ENCODE measurements at regions of chr12 and their contacts with region 1.

Region 1: GRCh38 chr12:102169922-102170621 is 27.6 kb downstream of the PMCH start:
- DNase-seq: peak; percentile 22
- CTCF ChIP-seq: peak; percentile 68

Region 2: GRCh38 chr12:102144221-102144620 is 25.9 kb before region 1 on chr12:
- CTCF ChIA-PET with region 1: interaction called, 12 read pairs
- POLR2A ChIA-PET with region 1: no interaction called
- DNase-seq: no peak
- CTCF ChIP-seq: no peak